B cell (primary cell): ENCODE measurements at regions of chr19 and their contacts with region 1.

Region 1: GRCh38 chr19:14366498-14366915 is 14.7 kb upstream of the ADGRE5 start:
- DNase-seq: peak; percentile 91
- ATAC-seq: peak; percentile 47
- H3K4me3 ChIP-seq: no peak overlapping the region
- H3K4me3 Mint-ChIP-seq: peak overlapping the region; percentile 40
- H3K27ac ChIP-seq: peak overlapping the region; percentile 63 to 100
- H3K27ac Mint-ChIP-seq: peak overlapping the region; percentile 87
- H3K4me1 ChIP-seq: peaks cover 67 to 80% of the 10 kb centered on the region in 2 donors
- H3K4me1 Mint-ChIP-seq: peaks cover 61% of the 10 kb centered on the region
- H3K27me3 ChIP-seq: no peaks in the 10 kb centered on the region
- H3K27me3 Mint-ChIP-seq: no peaks in the 10 kb centered on the region
- CTCF ChIP-seq: no peak

Region 2: GRCh38 chr19:13727798-13728197 is 638.7 kb before region 1 on chr19:
- CTCF ChIA-PET with region 1: no interaction called
- POLR2A ChIA-PET with region 1: no interaction called
- intact Hi-C with region 1: no loop called
- DNase-seq: no peak
- ATAC-seq: no peak
- H3K4me3 ChIP-seq: no peak overlapping the region
- H3K4me3 Mint-ChIP-seq: no peak overlapping the region
- H3K27ac ChIP-seq: no peak overlapping the region
- H3K27ac Mint-ChIP-seq: no peak overlapping the region
- H3K4me1 ChIP-seq: peaks cover 6 to 22% of the 10 kb centered on the region in 2 donors
- H3K4me1 Mint-ChIP-seq: peaks cover 19% of the 10 kb centered on the region
- H3K27me3 ChIP-seq: no peaks in the 10 kb centered on the region
- H3K27me3 Mint-ChIP-seq: peaks cover 4% of the 10 kb centered on the region
- CTCF ChIP-seq: no peak

Region 3: DNA sequence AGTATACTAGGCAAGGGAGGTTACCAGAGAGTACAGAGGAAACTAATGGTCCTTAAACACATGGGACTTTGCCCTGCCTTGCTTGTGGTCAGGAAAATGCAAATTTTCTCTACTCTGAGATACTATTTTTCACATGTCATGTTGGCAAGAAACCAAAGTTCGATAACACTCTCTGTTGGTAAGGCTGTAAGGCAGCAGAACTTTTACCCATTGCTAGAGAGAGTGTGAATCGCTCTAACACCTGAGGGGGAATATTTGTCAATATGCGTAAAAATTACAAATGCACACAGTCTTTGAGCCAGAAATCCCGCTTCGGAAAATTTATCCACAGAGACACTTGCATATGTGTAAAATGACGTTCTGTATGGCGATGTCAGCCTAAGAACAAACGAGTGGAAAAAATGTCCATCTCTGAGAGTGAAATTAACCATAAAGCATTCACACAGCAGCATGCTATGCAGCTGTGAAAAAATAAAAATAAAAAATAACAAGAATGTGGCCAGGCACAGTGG is 350.9 kb before region 1 on chr19:
- CTCF ChIA-PET with region 1: no interaction called
- POLR2A ChIA-PET with region 1: interaction called, 13 read pairs
- intact Hi-C with region 1: no loop called
- DNase-seq: peak; percentile 78
- ATAC-seq: peak; percentile 76
- H3K4me3 ChIP-seq: peak overlapping the region in 3 of 5 experiments; percentile 20 to 58 (median 29)
- H3K4me3 Mint-ChIP-seq: peak overlapping the region; percentile 82
- H3K27ac ChIP-seq: peak overlapping the region; percentile 7 to 56
- H3K27ac Mint-ChIP-seq: peak overlapping the region; percentile 88
- H3K4me1 ChIP-seq: peaks cover 28 to 57% of the 10 kb centered on the region in 2 donors
- H3K4me1 Mint-ChIP-seq: peaks cover 37% of the 10 kb centered on the region
- H3K27me3 ChIP-seq: no peaks in the 10 kb centered on the region
- H3K27me3 Mint-ChIP-seq: no peaks in the 10 kb centered on the region
- CTCF ChIP-seq: no peak

Region 4: GRCh38 chr19:14383661-14384555 is 17.4 kb after region 1 on chr19:
- CTCF ChIA-PET with region 1: interaction called, 90 read pairs
- POLR2A ChIA-PET with region 1: interaction called, 61 read pairs
- intact Hi-C with region 1: loop called (anchors 1 kb)
- DNase-seq: peak; percentile 68
- ATAC-seq: peak; percentile 12
- H3K4me3 ChIP-seq: peak overlapping the region; percentile 19 to 90 (median 39)
- H3K4me3 Mint-ChIP-seq: peak overlapping the region; percentile 85
- H3K27ac ChIP-seq: peak overlapping the region; percentile 97 to 99
- H3K27ac Mint-ChIP-seq: peak overlapping the region; percentile 89
- H3K4me1 ChIP-seq: peaks cover 48 to 70% of the 10 kb centered on the region in 2 donors
- H3K4me1 Mint-ChIP-seq: peaks cover 51% of the 10 kb centered on the region
- H3K27me3 ChIP-seq: no peaks in the 10 kb centered on the region
- H3K27me3 Mint-ChIP-seq: no peaks in the 10 kb centered on the region
- CTCF ChIP-seq: no peak

Region 5: GRCh38 chr19:14400951-14401431 is 34.5 kb after region 1 on chr19:
- CTCF ChIA-PET with region 1: interaction called, 213 read pairs
- POLR2A ChIA-PET with region 1: interaction called, 13 read pairs
- intact Hi-C with region 1: loop called (anchors 1 kb)
- DNase-seq: peak; percentile 77
- ATAC-seq: peak; percentile 65
- H3K4me3 ChIP-seq: no peak overlapping the region
- H3K4me3 Mint-ChIP-seq: peak overlapping the region; percentile 44
- H3K27ac ChIP-seq: peak overlapping the region; percentile 75 to 81
- H3K27ac Mint-ChIP-seq: peak overlapping the region; percentile 90
- H3K4me1 ChIP-seq: peaks cover 7 to 32% of the 10 kb centered on the region in 2 donors
- H3K4me1 Mint-ChIP-seq: peaks cover 23% of the 10 kb centered on the region
- H3K27me3 ChIP-seq: no peaks in the 10 kb centered on the region
- H3K27me3 Mint-ChIP-seq: no peaks in the 10 kb centered on the region
- CTCF ChIP-seq: no peak

Region 6: DNA sequence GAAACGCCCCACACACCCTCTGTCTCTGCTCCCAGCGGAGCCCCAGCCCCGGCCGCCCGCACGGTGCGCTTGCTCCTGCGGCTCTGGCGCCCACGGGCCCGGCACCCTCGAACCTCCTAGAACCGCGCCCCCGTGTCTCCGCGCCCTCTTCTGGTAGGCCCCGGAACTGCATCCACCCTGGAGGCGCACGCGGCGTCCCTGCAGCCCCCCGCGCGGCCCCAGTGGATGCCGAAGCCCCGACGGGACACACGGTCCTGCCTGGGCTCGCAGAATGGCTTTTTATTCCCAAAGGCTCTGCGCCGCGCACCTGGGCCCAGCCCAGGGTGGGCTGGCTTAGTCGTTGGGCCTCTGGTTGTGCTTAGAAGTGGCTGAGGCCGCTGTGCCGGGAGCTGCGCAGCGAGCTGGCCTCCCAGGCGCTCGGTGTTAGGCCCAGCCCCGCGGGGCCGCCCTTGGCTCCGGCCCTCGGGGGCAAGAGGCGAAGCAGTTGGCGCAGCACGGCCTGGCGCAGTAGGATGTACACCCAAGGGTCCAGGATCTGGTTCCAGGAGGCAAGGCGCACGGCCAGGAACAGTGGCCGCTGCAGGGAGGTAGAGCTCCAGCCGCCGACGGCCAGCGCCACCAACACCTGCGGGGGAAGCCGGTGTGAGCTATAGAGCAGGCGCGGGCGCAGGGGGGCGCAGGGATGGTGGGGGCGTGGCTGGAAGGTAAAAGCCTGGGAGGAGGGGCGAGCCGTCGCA is 105.9 kb after region 1 on chr19:
- CTCF ChIA-PET with region 1: interaction called, 21 read pairs
- POLR2A ChIA-PET with region 1: no interaction called
- intact Hi-C with region 1: no loop called
- DNase-seq: peak; percentile 87
- ATAC-seq: peak; percentile 83
- H3K4me3 ChIP-seq: peak overlapping the region in 3 of 5 experiments; percentile 24 to 46 (median 38)
- H3K4me3 Mint-ChIP-seq: peak overlapping the region; percentile 61
- H3K27ac ChIP-seq: no peak overlapping the region
- H3K27ac Mint-ChIP-seq: no peak overlapping the region
- H3K4me1 ChIP-seq: peaks cover 21 to 27% of the 10 kb centered on the region in 2 donors
- H3K4me1 Mint-ChIP-seq: peaks cover 27% of the 10 kb centered on the region
- H3K27me3 ChIP-seq: peaks cover 0 to 28% (median 14%) of the 10 kb centered on the region in 4 experiments
- H3K27me3 Mint-ChIP-seq: peaks cover 28% of the 10 kb centered on the region
- CTCF ChIP-seq: peak; percentile 99